GM12878 (cell line): ENCODE measurements at regions of chr11 and their contacts with region 1.

Region 1: GRCh38 chr11:72141066-72141465 is 5.5 kb downstream of the FOLR3 start:
- DNase-seq: no peak
- ATAC-seq: no peak
- H3K4me3 ChIP-seq: no peak overlapping the region
- H3K27ac ChIP-seq: no peak overlapping the region
- H3K4me1 ChIP-seq: no peaks in the 10 kb centered on the region
- H3K27me3 ChIP-seq: no peaks in the 10 kb centered on the region; a peak in 1 of 4 replicates
- CTCF ChIP-seq: no peak
- EP300 ChIP-seq: no peak
- POLR2A ChIP-seq: no peak
- RAD21 ChIP-seq: no peak

Region 2: GRCh38 chr11:71489311-71490048 is 651.6 kb before region 1 on chr11:
- CTCF ChIA-PET with region 1: no interaction called
- POLR2A ChIA-PET with region 1: no interaction called
- RAD21 ChIA-PET with region 1: no interaction called
- SMC1A ChIA-PET with region 1: no interaction called
- in situ Hi-C with region 1: no loop called
- intact Hi-C with region 1: no loop called
- DNase-seq: peak; percentile 27
- ATAC-seq: peak; percentile 99
- H3K4me3 ChIP-seq: no peak overlapping the region
- H3K27ac ChIP-seq: peak overlapping the region; percentile 74
- H3K4me1 ChIP-seq: peaks cover 11% of the 10 kb centered on the region
- H3K27me3 ChIP-seq: no peaks in the 10 kb centered on the region
- CTCF ChIP-seq: no peak
- EP300 ChIP-seq: no peak
- POLR2A ChIP-seq: peak; percentile 36; the same call in 1 of the 2 replicates
- RAD21 ChIP-seq: no peak; the same call in 1 of the 2 replicates

Region 3: GRCh38 chr11:72125951-72126350 is 15.1 kb before region 1 on chr11:
- CTCF ChIA-PET with region 1: interaction called, 16 read pairs
- POLR2A ChIA-PET with region 1: no interaction called
- RAD21 ChIA-PET with region 1: no interaction called
- SMC1A ChIA-PET with region 1: interaction called, 5 read pairs
- in situ Hi-C with region 1: no loop called
- intact Hi-C with region 1: no loop called
- DNase-seq: no peak
- ATAC-seq: no peak
- H3K4me3 ChIP-seq: no peak overlapping the region
- H3K27ac ChIP-seq: no peak overlapping the region
- H3K4me1 ChIP-seq: no peaks in the 10 kb centered on the region
- H3K27me3 ChIP-seq: no peaks in the 10 kb centered on the region
- CTCF ChIP-seq: no peak
- EP300 ChIP-seq: no peak
- POLR2A ChIP-seq: no peak
- RAD21 ChIP-seq: no peak

Region 4: DNA sequence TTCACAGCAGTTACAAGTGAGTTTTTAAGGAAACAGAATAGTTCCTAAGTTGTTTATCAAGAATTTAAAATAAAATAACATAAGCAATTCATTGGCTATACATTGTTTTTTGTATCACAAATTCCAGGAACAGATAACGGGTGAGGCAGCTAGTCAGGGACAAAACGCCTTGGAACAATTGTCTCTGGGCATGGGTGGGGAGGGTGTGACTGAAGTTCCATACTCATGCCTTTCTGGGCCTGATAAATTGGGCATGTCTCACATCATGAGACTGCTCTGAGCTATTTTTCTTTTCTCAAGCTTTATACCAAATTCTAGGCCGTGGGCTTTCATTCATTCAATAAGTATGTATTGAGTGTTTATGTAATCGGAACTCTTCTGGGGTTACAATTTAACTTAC is 16.1 kb after region 1 on chr11:
- CTCF ChIA-PET with region 1: interaction called, 52 read pairs
- POLR2A ChIA-PET with region 1: no interaction called
- RAD21 ChIA-PET with region 1: interaction called, 4 read pairs
- SMC1A ChIA-PET with region 1: interaction called, 17 read pairs
- in situ Hi-C with region 1: no loop called
- intact Hi-C with region 1: no loop called
- DNase-seq: no peak
- ATAC-seq: no peak
- H3K4me3 ChIP-seq: no peak overlapping the region
- H3K27ac ChIP-seq: no peak overlapping the region
- H3K4me1 ChIP-seq: no peaks in the 10 kb centered on the region
- H3K27me3 ChIP-seq: no peaks in the 10 kb centered on the region
- CTCF ChIP-seq: no peak
- EP300 ChIP-seq: no peak
- POLR2A ChIP-seq: no peak
- RAD21 ChIP-seq: no peak

Region 5: DNA sequence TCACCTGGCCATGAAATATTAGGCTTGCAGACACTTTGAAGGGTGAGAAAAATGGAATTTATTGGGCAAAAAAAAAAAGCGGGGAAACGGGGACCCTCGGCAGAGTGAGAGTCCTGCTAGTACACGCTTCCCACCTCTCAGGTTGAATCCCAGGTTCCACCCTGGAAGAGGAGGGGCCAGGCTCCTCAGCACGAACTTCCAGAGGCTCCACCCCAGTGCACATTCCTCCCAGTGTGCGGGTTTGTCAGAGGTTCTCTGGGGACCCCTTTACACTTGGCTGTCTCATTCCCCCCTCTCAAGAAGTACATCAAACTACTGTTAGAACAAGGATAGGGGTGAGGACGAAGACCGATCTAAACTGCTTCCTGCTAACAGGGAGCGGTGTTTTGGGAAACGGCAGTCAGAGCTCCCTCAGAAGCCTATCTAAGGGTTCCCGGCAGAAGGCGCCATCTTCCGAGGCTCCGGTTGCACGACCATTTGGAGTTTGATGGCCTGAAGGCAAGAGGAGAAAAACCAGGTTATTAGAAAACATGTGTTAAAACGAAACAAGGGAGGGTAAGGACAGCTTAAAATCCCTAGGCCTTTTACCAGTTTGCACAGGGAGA is 21.9 kb after region 1 on chr11:
- CTCF ChIA-PET with region 1: interaction called, 52 read pairs
- POLR2A ChIA-PET with region 1: no interaction called
- RAD21 ChIA-PET with region 1: interaction called, 3 read pairs
- SMC1A ChIA-PET with region 1: interaction called, 3 read pairs
- in situ Hi-C with region 1: no loop called
- intact Hi-C with region 1: no loop called
- DNase-seq: no peak
- ATAC-seq: no peak
- H3K4me3 ChIP-seq: no peak overlapping the region
- H3K27ac ChIP-seq: no peak overlapping the region
- H3K4me1 ChIP-seq: no peaks in the 10 kb centered on the region
- H3K27me3 ChIP-seq: no peaks in the 10 kb centered on the region
- CTCF ChIP-seq: no peak
- EP300 ChIP-seq: no peak
- POLR2A ChIP-seq: no peak
- RAD21 ChIP-seq: no peak

Region 6: DNA sequence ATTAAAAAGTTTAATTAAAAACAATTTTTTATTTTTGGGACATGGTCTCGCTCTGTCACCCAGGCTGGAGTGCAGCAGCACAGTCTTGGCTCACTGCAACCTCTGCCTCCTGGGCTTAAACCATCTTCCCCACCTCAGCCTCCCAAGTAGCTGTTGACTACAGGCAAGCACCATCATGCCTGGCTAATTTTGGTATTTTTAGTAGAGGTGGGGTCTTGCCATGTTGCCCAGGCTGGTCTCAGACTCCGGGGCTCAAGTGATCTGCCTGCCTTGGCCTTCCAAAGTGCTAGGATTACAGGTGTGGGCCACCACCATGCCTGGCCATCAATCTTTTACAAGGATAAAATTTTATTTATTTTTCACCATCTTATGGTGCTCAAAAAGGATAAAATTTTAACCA is 146.2 kb after region 1 on chr11:
- CTCF ChIA-PET with region 1: no interaction called
- POLR2A ChIA-PET with region 1: no interaction called
- RAD21 ChIA-PET with region 1: no interaction called
- SMC1A ChIA-PET with region 1: no interaction called
- in situ Hi-C with region 1: no loop called
- intact Hi-C with region 1: no loop called
- DNase-seq: no peak
- ATAC-seq: no peak
- H3K4me3 ChIP-seq: no peak overlapping the region
- H3K27ac ChIP-seq: no peak overlapping the region
- H3K4me1 ChIP-seq: no peaks in the 10 kb centered on the region
- H3K27me3 ChIP-seq: no peaks in the 10 kb centered on the region
- CTCF ChIP-seq: no peak
- EP300 ChIP-seq: no peak
- POLR2A ChIP-seq: no peak
- RAD21 ChIP-seq: no peak

Region 7: DNA sequence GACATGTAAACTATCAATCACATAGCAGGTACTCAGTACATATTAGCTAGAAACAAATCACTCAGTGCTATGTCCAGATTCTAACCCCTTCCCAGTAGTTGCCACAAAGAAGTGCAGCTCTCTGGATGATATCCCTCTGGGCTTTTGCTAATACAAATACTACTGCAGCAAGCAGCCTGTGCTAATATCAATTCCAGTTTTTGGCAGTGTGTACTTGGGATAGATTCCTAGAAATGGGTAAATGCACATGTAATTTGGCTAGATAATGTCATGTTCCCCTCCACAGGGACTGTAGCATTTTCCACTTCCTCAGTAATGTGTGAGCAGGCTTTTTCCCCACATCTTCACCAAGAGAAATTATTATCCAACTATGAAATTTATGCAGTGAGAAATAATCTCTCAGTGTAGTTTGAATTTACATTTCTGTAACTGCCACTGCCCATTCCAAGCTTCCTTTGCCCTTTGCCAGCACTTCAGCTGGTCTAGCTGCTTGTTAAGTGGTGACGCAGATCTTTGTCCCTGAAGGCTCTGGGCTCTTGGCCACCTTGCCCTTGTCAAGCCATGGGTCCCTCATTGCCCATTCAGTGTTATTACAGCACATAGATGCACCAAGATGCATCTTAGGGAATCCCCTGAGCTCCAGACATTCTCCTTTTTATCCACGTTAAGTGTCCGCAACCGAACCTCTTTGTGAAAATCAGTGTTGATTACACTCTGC is 400.4 kb after region 1 on chr11:
- CTCF ChIA-PET with region 1: no interaction called
- POLR2A ChIA-PET with region 1: no interaction called
- RAD21 ChIA-PET with region 1: no interaction called
- SMC1A ChIA-PET with region 1: no interaction called
- in situ Hi-C with region 1: no loop called
- intact Hi-C with region 1: no loop called
- DNase-seq: no peak
- ATAC-seq: no peak
- H3K4me3 ChIP-seq: no peak overlapping the region
- H3K27ac ChIP-seq: no peak overlapping the region
- H3K4me1 ChIP-seq: no peaks in the 10 kb centered on the region
- H3K27me3 ChIP-seq: peaks cover 2 to 3% of the 10 kb centered on the region in 2 experiments; a peak in 3 of 4 replicates
- CTCF ChIP-seq: no peak
- EP300 ChIP-seq: no peak
- POLR2A ChIP-seq: no peak
- RAD21 ChIP-seq: no peak